ENCODE measurements at regions of chr1 and their contacts with region 1.

Region 1: DNA sequence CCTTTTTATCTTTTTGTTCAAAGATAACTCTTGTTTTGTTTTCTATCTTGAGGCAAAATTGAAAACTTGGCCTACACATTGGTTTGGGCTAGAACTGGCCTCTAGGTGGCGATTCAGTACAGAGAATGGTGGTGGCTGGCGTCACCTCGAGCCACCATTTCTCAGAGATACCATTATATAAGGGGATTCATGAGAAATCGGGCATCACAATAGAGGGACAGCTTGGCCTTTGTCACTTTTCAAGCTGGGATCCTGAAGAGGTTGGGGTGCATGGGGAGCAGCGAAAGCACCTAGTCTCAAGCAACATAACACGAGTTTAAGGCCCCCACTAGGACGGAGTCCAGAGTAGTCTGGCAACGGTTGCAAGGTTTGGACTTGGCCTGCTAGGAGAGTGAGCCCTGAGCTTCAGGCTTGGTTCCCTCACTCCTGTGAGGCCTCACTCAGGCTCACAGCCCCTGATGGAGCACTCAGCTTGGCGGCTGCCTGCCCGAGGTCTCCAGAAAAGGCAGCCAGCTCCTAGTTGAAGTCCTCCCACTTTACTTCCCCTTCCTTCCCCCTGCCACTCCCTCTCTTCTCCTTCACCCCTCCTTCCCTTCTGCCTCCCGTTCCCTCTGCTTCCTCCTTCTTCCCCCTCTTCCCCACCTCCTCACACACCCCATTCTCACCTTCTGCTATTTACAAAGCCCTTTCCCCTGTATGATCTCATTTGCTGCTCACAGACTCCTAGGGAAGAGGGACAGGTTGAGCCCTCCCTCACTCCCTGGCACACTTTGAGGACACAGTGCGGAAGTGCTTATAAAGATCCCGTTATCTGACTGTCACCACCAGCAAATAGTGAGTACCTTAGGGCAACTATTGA is 67.8 kb downstream of the LRIG2 start:
- DNase-seq: peak; percentile 24
- H3K4me3 Mint-ChIP-seq: no peak overlapping the region
- H3K27ac Mint-ChIP-seq: no peak overlapping the region
- H3K4me1 Mint-ChIP-seq: peaks cover 15% of the 10 kb centered on the region
- H3K27me3 Mint-ChIP-seq: no peaks in the 10 kb centered on the region

Region 2: DNA sequence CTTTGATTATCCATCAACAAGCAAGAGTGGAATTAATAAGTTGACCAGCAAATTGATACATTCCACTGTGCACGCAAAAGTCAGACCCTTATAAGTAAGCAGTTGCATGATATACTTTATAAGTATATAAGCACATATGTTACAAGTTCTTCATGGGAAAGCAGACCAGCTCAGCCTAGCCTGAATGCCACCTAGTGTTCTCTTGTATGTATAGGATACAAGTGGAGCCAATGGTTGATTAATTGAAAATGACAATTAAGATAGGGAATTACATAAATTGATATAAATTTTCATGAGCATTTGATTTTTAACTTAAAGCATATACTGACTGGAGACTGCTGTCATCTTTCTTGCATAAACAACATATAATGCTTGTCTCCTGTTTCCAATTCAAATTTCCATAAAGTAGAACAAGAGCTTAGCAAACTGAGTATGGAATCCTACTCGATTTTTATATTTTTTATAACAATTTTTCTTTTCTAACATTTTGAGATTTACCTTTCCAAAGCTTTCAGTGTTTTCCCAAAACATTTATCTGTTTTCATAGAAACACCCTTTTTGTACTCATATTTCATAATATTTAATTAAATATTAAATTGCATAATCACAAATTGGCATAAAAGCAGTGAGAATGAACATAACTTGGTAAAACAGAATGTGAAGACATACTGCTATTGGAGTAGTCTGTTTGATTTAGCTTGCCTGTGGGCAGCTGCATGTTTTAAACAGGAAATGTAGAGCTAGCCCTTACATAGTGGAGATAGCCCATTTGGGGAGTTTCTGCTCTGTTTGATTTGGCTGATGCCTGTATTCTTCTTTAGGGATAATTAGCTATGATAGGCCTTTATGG is 312.3 kb after region 1 on chr1:
- intact Hi-C with region 1: loop called (anchors 1 kb)
- DNase-seq: no peak
- H3K4me3 Mint-ChIP-seq: no peak overlapping the region
- H3K27ac Mint-ChIP-seq: no peak overlapping the region
- H3K4me1 Mint-ChIP-seq: no peaks in the 10 kb centered on the region
- H3K27me3 Mint-ChIP-seq: no peaks in the 10 kb centered on the region

Region 3: GRCh38 chr1:113616156-113616555 is 475.3 kb after region 1 on chr1:
- intact Hi-C with region 1: loop called (anchors 10 kb)
- DNase-seq: no peak
- H3K4me3 Mint-ChIP-seq: no peak overlapping the region
- H3K27ac Mint-ChIP-seq: no peak overlapping the region
- H3K4me1 Mint-ChIP-seq: no peaks in the 10 kb centered on the region
- H3K27me3 Mint-ChIP-seq: peaks cover 2% of the 10 kb centered on the region

Region 4: GRCh38 chr1:113677250-113678158 is 536.7 kb after region 1 on chr1:
- intact Hi-C with region 1: loop called (anchors 1 kb)
- DNase-seq: no peak
- H3K4me3 Mint-ChIP-seq: no peak overlapping the region
- H3K27ac Mint-ChIP-seq: no peak overlapping the region
- H3K4me1 Mint-ChIP-seq: peaks cover 6% of the 10 kb centered on the region
- H3K27me3 Mint-ChIP-seq: no peaks in the 10 kb centered on the region